Activated CD4-positive, alpha-beta T cell treated with anti-CD3 and anti-CD28 coated beads, Interleukin-2, amount 10 ng/mL, durations not matched to agents 24 days and 14 days (primary cell): ENCODE measurements at regions of chr1 and their contacts with region 1.

Region 1: GRCh38 chr1:211382714-211383480 is 56.3 kb downstream of the TRAF5 start:
- DNase-seq: peak; percentile 95
- H3K4me3 Mint-ChIP-seq: peak overlapping the region; percentile 80
- H3K27ac Mint-ChIP-seq: peak overlapping the region; percentile 93
- H3K4me1 Mint-ChIP-seq: peaks cover 43% of the 10 kb centered on the region
- H3K27me3 Mint-ChIP-seq: peaks cover 6% of the 10 kb centered on the region

Region 2: DNA sequence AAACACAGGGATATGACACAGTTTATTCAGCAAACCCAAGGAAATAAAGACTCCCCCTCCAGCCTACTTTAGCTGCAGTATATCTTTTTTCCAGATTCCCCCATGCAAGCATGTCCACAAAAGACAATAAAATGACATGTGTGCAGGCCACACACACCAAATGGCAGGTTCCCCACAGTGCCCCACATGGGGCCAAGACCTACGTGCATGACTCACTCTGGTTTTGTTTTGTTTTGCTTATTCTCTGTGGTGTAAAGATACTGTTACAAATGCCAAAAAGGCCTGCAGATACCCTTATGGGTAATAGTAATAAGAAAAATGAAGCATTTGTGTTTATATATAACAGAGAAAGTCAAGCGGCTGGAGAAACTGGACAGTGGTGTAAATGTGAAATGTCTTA is 37.5 kb after region 1 on chr1:
- intact Hi-C with region 1: loop called (anchors 2 kb)
- DNase-seq: no peak
- H3K4me3 Mint-ChIP-seq: no peak overlapping the region
- H3K27ac Mint-ChIP-seq: peak overlapping the region; percentile 13
- H3K4me1 Mint-ChIP-seq: peaks cover 21% of the 10 kb centered on the region
- H3K27me3 Mint-ChIP-seq: peaks cover 3% of the 10 kb centered on the region

Region 3: GRCh38 chr1:211476200-211476849 is 93.4 kb after region 1 on chr1:
- intact Hi-C with region 1: loop called (anchors 1 kb)
- DNase-seq: peak; percentile 93
- H3K4me3 Mint-ChIP-seq: no peak overlapping the region
- H3K27ac Mint-ChIP-seq: no peak overlapping the region
- H3K4me1 Mint-ChIP-seq: peaks cover 2% of the 10 kb centered on the region
- H3K27me3 Mint-ChIP-seq: peaks cover 22% of the 10 kb centered on the region

Region 4: DNA sequence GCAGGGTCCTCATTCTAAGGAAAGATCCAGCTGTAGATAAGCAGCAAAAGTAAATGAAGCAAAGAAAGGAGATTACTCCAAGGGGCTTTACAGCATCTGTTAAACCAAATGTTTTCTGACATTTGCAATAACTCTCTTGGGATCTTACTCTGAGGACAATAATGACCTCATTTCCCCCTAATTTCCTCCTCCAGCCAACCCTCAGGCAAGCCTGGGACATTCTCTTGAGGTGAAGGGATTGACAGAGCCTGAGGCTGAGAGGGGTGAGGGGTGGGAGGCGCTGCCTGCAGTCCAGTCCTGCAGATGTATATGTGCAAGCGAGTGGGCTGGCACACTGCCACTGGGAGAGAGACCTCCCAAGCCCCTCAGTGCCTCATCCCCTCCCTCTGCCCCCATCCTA is 333.1 kb after region 1 on chr1:
- intact Hi-C with region 1: no loop called
- DNase-seq: no peak
- H3K4me3 Mint-ChIP-seq: no peak overlapping the region
- H3K27ac Mint-ChIP-seq: no peak overlapping the region
- H3K4me1 Mint-ChIP-seq: no peaks in the 10 kb centered on the region
- H3K27me3 Mint-ChIP-seq: peaks cover 11% of the 10 kb centered on the region